Pancreas (tissue), 10 donors: ENCODE measurements at regions of chr14 and their contacts with region 1.

Region 1: DNA sequence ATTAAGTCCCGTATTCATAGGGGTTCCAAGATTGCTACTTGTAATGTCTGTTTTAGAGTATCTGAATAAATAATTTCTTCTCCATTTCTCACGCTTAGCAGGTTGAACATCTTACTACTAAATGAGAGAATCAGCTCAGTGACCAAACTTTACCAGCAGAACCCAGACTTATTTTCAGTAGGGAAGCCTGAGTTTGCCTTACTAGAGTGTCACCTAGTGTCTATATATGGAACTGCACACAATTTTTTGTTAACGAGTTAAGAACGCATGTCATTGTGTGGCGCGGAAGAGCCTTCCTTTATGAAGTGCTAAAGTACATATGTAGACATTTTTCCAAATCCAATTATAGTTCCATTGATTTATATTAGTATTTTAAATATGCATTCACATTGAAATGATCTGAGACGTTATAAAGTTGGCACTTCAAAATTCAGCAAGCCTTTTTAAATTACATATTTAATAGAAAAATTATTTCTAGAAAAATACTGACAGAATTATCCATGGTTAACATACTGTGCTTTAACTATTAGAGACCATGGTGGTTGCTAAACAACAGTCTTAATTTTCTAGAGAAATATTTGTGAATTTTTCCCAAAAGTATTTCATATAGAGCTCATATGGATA is 88.3 kb downstream of the RPS29 start:
- DNase-seq: peak in 1 of 6 donors; percentile 12
- ATAC-seq: peak; percentile 58 to 93 (median 88)
- H3K4me3 ChIP-seq: no peak overlapping the region
- H3K27ac ChIP-seq: no peak overlapping the region
- H3K4me1 ChIP-seq: no peaks in the 10 kb centered on the region
- H3K27me3 ChIP-seq: no peaks in the 10 kb centered on the region
- CTCF ChIP-seq: peak; percentile 68 to 86 (median 76)

Region 2: DNA sequence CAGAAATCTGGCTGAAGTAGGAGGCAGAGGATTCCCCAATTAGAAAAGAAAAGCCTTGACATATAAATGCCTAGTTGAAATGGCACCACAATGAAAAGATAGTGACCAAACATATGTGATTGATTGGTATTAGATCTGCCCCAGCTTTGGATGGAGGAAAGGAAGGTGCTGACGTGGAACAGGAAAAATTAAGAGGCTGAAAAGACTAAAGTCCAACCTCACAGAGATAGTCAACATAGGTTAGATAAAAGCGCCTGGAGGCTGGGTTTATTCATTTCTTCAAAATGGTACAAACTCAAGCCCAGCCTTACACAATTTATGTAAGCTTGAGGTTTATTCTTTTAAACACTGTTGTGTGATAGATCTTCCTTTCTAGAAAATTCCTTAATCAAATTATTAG is 41.2 kb before region 1 on chr14:
- intact Hi-C with region 1: loop called in 1 of 3 experiments (anchors 5 kb)
- DNase-seq: no peak
- ATAC-seq: no peak
- H3K4me3 ChIP-seq: no peak overlapping the region
- H3K27ac ChIP-seq: no peak overlapping the region
- H3K4me1 ChIP-seq: no peaks in the 10 kb centered on the region
- H3K27me3 ChIP-seq: no peaks in the 10 kb centered on the region
- CTCF ChIP-seq: no peak